ENCODE measurements at regions of chr11 and their contacts with region 1.

Region 1: DNA sequence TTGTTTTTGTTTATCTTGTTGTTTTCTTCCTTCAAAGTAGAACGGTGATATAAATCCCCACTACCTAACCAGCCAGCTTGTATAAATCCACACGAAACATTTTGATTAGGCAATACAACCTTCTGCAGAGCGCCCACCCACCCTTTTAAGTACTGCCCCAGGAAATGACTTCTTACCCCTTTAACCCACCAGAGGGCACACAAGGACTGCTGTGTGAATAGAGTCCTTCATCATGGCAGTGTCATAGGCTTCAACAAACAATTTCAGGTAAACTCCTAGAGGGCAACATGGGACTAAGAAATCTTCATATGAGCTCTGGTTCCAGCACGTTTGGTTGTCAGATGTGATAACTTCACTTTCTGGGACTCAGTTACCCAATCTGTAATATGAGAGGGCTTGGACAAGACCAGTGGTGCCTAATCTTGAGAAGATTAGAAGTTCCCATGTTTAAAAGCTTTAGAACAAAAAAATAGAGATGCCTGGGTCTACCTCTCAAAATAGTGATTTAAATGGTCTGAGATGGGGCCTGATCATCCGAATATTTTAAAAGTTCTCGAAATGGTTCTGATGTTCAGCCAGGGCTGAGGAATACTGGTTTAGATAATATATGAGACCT is 56.1 kb downstream of the PIWIL4 start:
- DNase-seq: peak; percentile 86
- H3K4me3 Mint-ChIP-seq: no peak overlapping the region
- H3K27ac Mint-ChIP-seq: no peak overlapping the region
- H3K4me1 Mint-ChIP-seq: peaks cover 6% of the 10 kb centered on the region
- H3K27me3 Mint-ChIP-seq: no peaks in the 10 kb centered on the region
- CTCF ChIP-seq: peak; percentile 81

Region 2: DNA sequence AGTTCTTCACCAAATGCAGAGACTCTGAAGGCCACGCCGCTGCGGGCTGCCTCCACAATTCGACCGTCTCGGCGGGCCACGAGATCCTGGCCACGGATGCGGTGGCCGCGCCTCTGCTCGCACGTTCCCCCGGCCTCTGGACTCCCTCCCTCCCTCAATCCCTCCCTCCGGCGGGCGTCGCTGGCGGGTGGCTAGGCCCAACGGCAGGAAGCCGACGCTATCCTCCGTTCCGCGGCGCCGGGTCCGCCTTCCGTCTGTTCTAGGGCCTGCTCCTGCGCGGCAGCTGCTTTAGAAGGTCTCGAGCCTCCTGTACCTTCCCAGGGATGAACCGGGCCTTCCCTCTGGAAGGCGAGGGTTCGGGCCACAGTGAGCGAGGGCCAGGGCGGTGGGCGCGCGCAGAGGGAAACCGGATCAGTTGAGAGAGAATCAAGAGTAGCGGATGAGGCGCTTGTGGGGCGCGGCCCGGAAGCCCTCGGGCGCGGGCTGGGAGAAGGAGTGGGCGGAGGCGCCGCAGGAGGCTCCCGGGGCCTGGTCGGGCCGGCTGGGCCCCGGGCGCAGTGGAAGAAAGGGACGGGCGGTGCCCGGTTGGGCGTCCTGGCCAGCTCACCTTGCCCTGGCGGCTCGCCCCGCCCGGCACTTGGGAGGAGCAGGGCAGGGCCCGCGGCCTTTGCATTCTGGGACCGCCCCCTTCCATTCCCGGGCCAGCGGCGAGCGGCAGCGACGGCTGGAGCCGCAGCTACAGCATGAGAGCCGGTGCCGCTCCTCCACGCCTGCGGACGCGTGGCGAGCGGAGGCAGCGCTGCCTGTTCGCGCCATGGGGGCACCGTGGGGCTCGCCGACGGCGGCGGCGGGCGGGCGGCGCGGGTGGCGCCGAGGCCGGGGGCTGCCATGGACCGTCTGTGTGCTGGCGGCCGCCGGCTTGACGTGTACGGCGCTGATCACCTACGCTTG is 79.3 kb before region 1 on chr11 and contains the start of gene FUT4:
- CTCF ChIA-PET with region 1: no interaction called
- POLR2A ChIA-PET with region 1: no interaction called
- intact Hi-C with region 1: no loop called
- DNase-seq: peak; percentile 85
- H3K4me3 Mint-ChIP-seq: peak within 1 kb of the TSS; percentile 66
- H3K27ac Mint-ChIP-seq: no peak within 1 kb of the TSS
- H3K4me1 Mint-ChIP-seq: peaks cover 10% of the 10 kb centered on the region
- H3K27me3 Mint-ChIP-seq: no peaks in the 10 kb centered on the region
- CTCF ChIP-seq: no peak
- total RNA-seq, gene FUT4: 0.23 and 0.32 TPM in 2 replicates

Region 3: GRCh38 chr11:94613120-94613519 is 10.1 kb before region 1 on chr11:
- CTCF ChIA-PET with region 1: interaction called, 46 read pairs
- POLR2A ChIA-PET with region 1: interaction called, 3 read pairs
- intact Hi-C with region 1: no loop called
- DNase-seq: no peak
- H3K4me3 Mint-ChIP-seq: no peak overlapping the region
- H3K27ac Mint-ChIP-seq: no peak overlapping the region
- H3K4me1 Mint-ChIP-seq: no peaks in the 10 kb centered on the region
- H3K27me3 Mint-ChIP-seq: no peaks in the 10 kb centered on the region
- CTCF ChIP-seq: no peak

Region 4: DNA sequence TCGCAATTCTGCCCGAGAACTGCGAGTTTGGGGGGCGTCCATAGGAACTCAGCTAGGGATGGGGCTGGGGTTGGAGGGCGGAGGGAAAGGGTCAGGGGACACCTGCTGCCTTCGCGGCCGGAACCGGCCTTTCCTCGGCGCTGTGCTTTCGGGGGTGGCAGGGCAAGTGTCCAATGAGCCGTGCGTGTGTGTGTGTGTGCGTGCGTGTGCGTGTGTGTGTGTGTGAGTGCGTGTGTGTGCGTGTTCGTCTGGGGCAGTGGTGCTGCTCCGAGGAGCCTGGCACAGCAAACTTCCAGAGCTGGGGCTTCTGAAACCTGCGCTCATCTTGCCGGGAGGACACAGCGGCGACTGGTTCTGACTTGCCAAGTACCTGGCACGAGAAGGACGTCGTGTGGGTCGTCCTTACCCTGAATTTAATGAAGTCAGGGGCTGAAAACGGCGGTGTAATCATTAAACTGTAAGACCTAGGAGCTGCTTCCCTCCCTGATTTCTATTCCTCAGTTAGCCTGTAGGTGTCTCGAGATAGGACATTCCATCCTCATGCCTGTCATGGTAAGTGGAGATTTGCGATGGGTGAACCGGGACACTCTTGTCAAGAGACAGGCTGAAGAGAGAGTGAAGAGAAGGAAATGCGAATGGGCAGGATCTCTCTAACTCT is 117.9 kb after region 1 on chr11:
- CTCF ChIA-PET with region 1: interaction called, 18 read pairs
- POLR2A ChIA-PET with region 1: interaction called, 3 read pairs
- intact Hi-C with region 1: no loop called
- DNase-seq: peak; percentile 57
- H3K4me3 Mint-ChIP-seq: peak overlapping the region; percentile 57
- H3K27ac Mint-ChIP-seq: peak overlapping the region; percentile 69
- H3K4me1 Mint-ChIP-seq: peaks cover 15% of the 10 kb centered on the region
- H3K27me3 Mint-ChIP-seq: no peaks in the 10 kb centered on the region
- CTCF ChIP-seq: no peak

Region 5: DNA sequence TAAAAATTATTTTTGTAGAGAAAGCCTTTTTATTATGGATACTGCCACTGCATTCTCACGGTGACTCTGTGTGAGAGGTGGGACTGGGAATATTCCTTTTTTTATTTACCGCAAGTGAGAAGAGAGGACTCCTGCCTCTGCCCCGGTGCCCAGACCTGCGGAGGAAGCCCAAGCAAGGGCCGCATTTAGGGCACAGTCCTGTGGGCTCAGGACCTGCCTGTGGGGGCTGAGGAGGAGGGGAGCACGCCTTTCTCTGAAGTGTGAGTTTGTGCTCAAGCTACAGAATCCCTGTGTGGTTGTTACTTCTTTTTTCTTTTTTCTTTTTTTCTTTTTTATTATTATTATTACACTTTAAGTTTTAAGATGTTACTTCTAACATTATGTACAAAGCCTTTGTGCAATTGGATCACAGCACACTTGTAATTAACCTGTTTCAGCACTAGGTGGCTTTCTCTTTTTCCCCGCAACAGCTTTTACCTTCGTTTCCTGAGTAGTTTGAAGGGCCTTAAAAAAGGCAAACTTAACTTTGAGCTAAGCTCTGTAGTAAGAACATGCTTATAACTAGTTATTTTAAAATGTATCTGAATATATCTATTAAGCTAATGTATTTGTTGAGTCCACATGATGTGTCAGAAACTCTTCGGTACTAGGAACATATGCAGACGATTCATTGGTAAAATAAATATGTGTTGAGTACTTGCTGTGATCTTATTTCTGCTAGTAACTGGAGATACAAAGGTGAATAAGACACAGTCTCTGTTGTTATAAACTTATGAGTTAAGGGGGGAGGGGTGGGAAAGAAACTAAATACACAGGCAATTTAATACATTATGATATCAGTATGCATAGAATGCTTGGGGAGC is 163.3 kb after region 1 on chr11:
- CTCF ChIA-PET with region 1: interaction called, 11 read pairs
- POLR2A ChIA-PET with region 1: no interaction called
- intact Hi-C with region 1: no loop called
- DNase-seq: peak; percentile 56
- H3K4me3 Mint-ChIP-seq: no peak overlapping the region
- H3K27ac Mint-ChIP-seq: no peak overlapping the region
- H3K4me1 Mint-ChIP-seq: peaks cover 53% of the 10 kb centered on the region
- H3K27me3 Mint-ChIP-seq: no peaks in the 10 kb centered on the region
- CTCF ChIP-seq: peak; percentile 47

Region 6: DNA sequence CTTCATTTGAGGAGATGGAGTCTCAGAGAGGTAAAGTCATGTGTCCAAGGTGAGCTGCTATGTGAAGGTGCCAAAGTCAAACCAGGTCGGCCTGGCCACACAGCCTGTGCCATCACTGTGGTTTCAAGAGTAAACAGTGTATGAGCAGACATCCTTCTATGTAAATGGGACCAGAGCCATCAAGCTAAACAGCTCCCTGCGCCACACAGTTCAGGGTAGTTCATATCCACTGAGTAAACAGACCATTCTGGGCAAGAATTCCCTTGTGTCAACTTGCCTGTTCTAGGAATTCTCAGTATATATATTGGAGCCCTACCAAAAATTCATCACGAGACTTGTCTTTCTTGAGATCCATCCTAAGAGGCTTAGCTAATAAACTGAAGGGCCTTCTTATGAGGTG is 222.4 kb after region 1 on chr11:
- CTCF ChIA-PET with region 1: interaction called, 64 read pairs
- POLR2A ChIA-PET with region 1: no interaction called
- intact Hi-C with region 1: no loop called
- DNase-seq: peak; percentile 65
- H3K4me3 Mint-ChIP-seq: no peak overlapping the region
- H3K27ac Mint-ChIP-seq: peak overlapping the region; percentile 13
- H3K4me1 Mint-ChIP-seq: peaks cover 12% of the 10 kb centered on the region
- H3K27me3 Mint-ChIP-seq: no peaks in the 10 kb centered on the region
- CTCF ChIP-seq: no peak

Region 7: DNA sequence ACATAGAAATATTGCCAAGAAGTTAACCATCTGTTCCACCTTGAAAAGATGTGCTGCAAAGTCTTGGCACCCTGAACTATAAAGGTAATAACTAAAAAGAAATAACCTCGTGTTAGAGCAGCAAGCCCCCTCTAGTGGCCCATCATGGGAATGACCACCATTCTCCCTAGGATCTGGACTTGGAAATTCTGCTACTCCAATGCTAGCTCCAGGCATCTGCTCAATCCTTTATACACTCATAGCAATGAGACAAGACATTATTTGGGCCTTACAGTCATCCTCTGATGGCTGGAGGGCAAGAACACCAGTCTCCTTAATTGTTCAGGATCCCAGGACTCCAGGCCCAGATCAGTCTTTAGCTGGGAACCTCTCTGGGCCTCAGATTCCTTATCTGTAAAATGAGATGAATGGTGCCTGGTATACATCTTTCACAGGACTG is 274.1 kb after region 1 on chr11:
- CTCF ChIA-PET with region 1: interaction called, 90 read pairs
- POLR2A ChIA-PET with region 1: interaction called, 3 read pairs
- intact Hi-C with region 1: loop called (anchors 1 kb)
- DNase-seq: peak; percentile 62
- H3K4me3 Mint-ChIP-seq: no peak overlapping the region
- H3K27ac Mint-ChIP-seq: no peak overlapping the region
- H3K4me1 Mint-ChIP-seq: no peaks in the 10 kb centered on the region
- H3K27me3 Mint-ChIP-seq: no peaks in the 10 kb centered on the region
- CTCF ChIP-seq: peak; percentile 83

Region 8: GRCh38 chr11:95067039-95067840 is 444.0 kb after region 1 on chr11:
- CTCF ChIA-PET with region 1: interaction called, 9 read pairs
- POLR2A ChIA-PET with region 1: interaction called, 3 read pairs
- intact Hi-C with region 1: loop called (anchors 1 kb)
- DNase-seq: peak; percentile 67
- H3K4me3 Mint-ChIP-seq: peak overlapping the region; percentile 99
- H3K27ac Mint-ChIP-seq: peak overlapping the region; percentile 95
- H3K4me1 Mint-ChIP-seq: peaks cover 15% of the 10 kb centered on the region
- H3K27me3 Mint-ChIP-seq: no peaks in the 10 kb centered on the region
- CTCF ChIP-seq: peak; percentile 50